ENCODE measurements at regions of chr12 and their contacts with region 1.

Region 1: DNA sequence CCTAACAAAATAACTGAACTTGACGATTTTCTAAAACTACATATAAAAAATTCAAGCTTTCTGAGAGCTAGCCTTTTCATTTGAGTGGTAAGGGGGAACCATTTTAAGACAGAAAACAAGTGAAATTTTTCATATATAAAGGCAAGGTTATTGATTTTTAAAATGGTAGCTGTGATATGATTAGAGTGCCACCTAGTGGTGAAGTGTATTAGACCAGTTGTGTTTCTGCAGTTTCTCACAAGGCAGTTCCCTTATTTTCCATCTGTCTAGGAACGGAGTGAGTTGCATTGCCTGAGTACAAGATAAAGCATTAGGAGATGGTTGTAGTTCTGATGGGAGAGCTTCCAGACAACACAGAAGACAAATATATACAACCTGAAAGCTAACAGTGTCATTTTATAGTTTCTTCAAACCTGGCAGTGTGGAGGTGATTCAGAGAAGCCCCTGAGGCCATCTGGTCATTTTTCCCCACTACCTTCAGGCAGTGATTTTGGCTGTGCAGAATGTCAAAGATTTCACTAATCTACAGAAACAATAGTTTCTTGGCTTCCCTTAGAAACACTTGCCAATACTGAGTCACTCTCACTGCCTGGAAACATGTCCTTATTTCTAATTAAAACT is 180.8 kb downstream of the C12orf50 start:
- DNase-seq: peak; percentile 78
- ATAC-seq: peak; percentile 60
- H3K4me3 ChIP-seq: no peak overlapping the region
- H3K27ac ChIP-seq: no peak overlapping the region
- H3K4me1 ChIP-seq: no peaks in the 10 kb centered on the region
- H3K27me3 ChIP-seq: no peaks in the 10 kb centered on the region
- CTCF ChIP-seq: peak; percentile 93

Region 2: GRCh38 chr12:86727151-86727550 is 1121.2 kb before region 1 on chr12:
- CTCF ChIA-PET with region 1: no interaction called
- POLR2A ChIA-PET with region 1: no interaction called
- intact Hi-C with region 1: loop called (anchors 5 kb)
- DNase-seq: peak; percentile 60
- ATAC-seq: peak; percentile 84
- H3K4me3 ChIP-seq: no peak overlapping the region
- H3K27ac ChIP-seq: no peak overlapping the region
- H3K4me1 ChIP-seq: peaks cover 7% of the 10 kb centered on the region
- H3K27me3 ChIP-seq: no peaks in the 10 kb centered on the region
- CTCF ChIP-seq: no peak

Region 3: DNA sequence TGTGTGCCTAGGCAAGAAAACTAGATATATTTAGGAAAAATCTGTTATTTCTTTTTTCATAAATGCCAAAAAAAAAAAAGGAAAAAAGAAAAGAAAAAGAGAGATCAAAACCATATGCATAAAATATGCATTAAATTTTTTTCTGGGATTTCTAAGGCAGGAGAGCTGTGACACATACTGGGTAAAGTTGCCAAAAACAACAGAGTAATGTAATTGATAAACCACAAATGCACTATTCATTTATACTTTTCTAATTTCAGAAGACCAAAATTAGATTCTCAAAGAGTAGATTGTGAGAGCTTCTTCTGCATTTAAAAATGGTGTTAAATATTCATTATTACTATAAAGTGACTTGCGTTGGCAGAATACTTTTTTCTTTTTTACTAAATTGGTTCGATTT is 918.4 kb before region 1 on chr12:
- CTCF ChIA-PET with region 1: no interaction called
- POLR2A ChIA-PET with region 1: no interaction called
- intact Hi-C with region 1: loop called (anchors 10 kb)
- DNase-seq: no peak
- ATAC-seq: no peak
- H3K4me3 ChIP-seq: no peak overlapping the region
- H3K27ac ChIP-seq: no peak overlapping the region
- H3K4me1 ChIP-seq: no peaks in the 10 kb centered on the region
- H3K27me3 ChIP-seq: no peaks in the 10 kb centered on the region
- CTCF ChIP-seq: no peak

Region 4: GRCh38 chr12:87428701-87429277 is 419.6 kb before region 1 on chr12:
- CTCF ChIA-PET with region 1: no interaction called
- POLR2A ChIA-PET with region 1: no interaction called
- intact Hi-C with region 1: loop called (anchors 10 kb)
- DNase-seq: peak; percentile 39
- ATAC-seq: peak; percentile 60
- H3K4me3 ChIP-seq: no peak overlapping the region
- H3K27ac ChIP-seq: peak overlapping the region; percentile 47
- H3K4me1 ChIP-seq: peaks cover 16% of the 10 kb centered on the region
- H3K27me3 ChIP-seq: no peaks in the 10 kb centered on the region
- CTCF ChIP-seq: no peak

Region 5: GRCh38 chr12:87801860-87802720 is 46.3 kb before region 1 on chr12:
- CTCF ChIA-PET with region 1: no interaction called
- POLR2A ChIA-PET with region 1: no interaction called
- intact Hi-C with region 1: no loop called
- DNase-seq: peak; percentile 49
- ATAC-seq: peak; percentile 65
- H3K4me3 ChIP-seq: no peak overlapping the region
- H3K27ac ChIP-seq: no peak overlapping the region
- H3K4me1 ChIP-seq: peaks cover 12% of the 10 kb centered on the region
- H3K27me3 ChIP-seq: no peaks in the 10 kb centered on the region
- CTCF ChIP-seq: no peak

Region 6: GRCh38 chr12:87866578-87867292 is 18.4 kb after region 1 on chr12:
- CTCF ChIA-PET with region 1: no interaction called
- POLR2A ChIA-PET with region 1: no interaction called
- intact Hi-C with region 1: no loop called
- DNase-seq: peak; percentile 55
- ATAC-seq: peak; percentile 66
- H3K4me3 ChIP-seq: no peak overlapping the region
- H3K27ac ChIP-seq: no peak overlapping the region
- H3K4me1 ChIP-seq: no peaks in the 10 kb centered on the region
- H3K27me3 ChIP-seq: no peaks in the 10 kb centered on the region
- CTCF ChIP-seq: peak; percentile 75

Measured in PC-3 (cell line).